ENCODE measurements at regions of chr6 and their contacts with region 1.

Region 1: GRCh38 chr6:319177-320131 is 27.2 kb downstream of the DUSP22 start:
- DNase-seq: peak; percentile 95
- ATAC-seq: peak; percentile 50
- H3K4me3 ChIP-seq: peak overlapping the region; percentile 57
- H3K27ac ChIP-seq: peak overlapping the region; percentile 92
- H3K4me1 ChIP-seq: peaks cover 98% of the 10 kb centered on the region
- H3K27me3 ChIP-seq: no peaks in the 10 kb centered on the region
- CTCF ChIP-seq: no peak
- EP300 ChIP-seq: peak; percentile 72 to 85; a peak in 3 of 4 replicates
- POLR2A ChIP-seq: no peak
- RAD21 ChIP-seq: no peak

Region 2: DNA sequence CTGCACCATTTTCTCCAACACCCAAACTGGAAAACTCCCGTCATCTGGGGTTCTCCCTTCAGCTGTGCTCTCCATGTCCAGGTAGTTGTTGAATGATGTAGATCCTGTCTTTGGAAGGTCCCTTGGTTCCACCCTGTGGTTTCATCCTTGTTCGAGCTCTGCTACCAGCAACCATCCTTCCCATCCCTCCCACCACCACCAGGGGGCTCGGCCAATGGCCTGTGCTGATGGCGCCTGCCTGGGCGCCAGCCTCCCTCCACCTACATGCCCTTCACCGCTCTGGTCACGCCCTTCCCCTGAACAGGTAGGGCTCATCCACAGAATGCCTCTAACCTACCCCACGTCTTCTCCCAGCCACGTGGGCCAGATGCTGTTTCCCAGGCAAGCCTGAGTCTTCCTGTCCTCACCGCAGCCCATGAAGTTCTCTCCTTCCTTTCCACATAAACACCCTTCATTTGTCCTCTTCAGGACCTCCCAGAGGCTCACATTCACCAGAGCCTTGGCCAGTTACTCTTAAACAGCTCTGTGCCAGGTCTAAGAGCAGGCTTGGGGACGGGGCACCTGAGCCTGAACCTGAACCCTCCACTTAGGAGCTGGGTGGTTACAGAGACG is 102.3 kb before region 1 on chr6:
- CTCF ChIA-PET with region 1: interaction called, 9 read pairs
- POLR2A ChIA-PET with region 1: interaction called, 5 read pairs
- RAD21 ChIA-PET with region 1: interaction called, 131 read pairs
- SMC1A ChIA-PET with region 1: interaction called, 14 read pairs
- in situ Hi-C with region 1: no loop called
- intact Hi-C with region 1: no loop called
- DNase-seq: peak; percentile 55
- ATAC-seq: 0 out of 3 replicates have a peak, but pooled peaks have one; percentile 1
- H3K4me3 ChIP-seq: peak overlapping the region; percentile 13; the same call in 1 of the 2 replicates
- H3K27ac ChIP-seq: peak overlapping the region; percentile 94
- H3K4me1 ChIP-seq: peaks cover 86% of the 10 kb centered on the region
- H3K27me3 ChIP-seq: no peaks in the 10 kb centered on the region
- CTCF ChIP-seq: peak; percentile 57 to 73 (median 73)
- EP300 ChIP-seq: no peak
- POLR2A ChIP-seq: no peak
- RAD21 ChIP-seq: peak; percentile 54

Region 3: GRCh38 chr6:291697-292505 is 27.6 kb before region 1 on chr6 and contains the start of gene DUSP22:
- CTCF ChIA-PET with region 1: interaction called, 46 read pairs
- POLR2A ChIA-PET with region 1: interaction called, 61 read pairs
- RAD21 ChIA-PET with region 1: interaction called, 112 read pairs
- SMC1A ChIA-PET with region 1: interaction called, 221 read pairs
- in situ Hi-C with region 1: no loop called
- intact Hi-C with region 1: loop called (anchors 1 kb)
- DNase-seq: peak; percentile 81
- ATAC-seq: peak; percentile 45
- H3K4me3 ChIP-seq: peak within 1 kb of the TSS; percentile 78
- H3K27ac ChIP-seq: peak within 1 kb of the TSS; percentile 100
- H3K4me1 ChIP-seq: peaks cover 64% of the 10 kb centered on the region
- H3K27me3 ChIP-seq: no peaks in the 10 kb centered on the region
- CTCF ChIP-seq: no peak
- EP300 ChIP-seq: peak; percentile 53 to 76; a peak in 2 of 4 replicates
- POLR2A ChIP-seq: no peak
- RAD21 ChIP-seq: peak; percentile 42
- polyA plus RNA-seq, gene DUSP22: 93.4 to 99.7 TPM

Region 4: DNA sequence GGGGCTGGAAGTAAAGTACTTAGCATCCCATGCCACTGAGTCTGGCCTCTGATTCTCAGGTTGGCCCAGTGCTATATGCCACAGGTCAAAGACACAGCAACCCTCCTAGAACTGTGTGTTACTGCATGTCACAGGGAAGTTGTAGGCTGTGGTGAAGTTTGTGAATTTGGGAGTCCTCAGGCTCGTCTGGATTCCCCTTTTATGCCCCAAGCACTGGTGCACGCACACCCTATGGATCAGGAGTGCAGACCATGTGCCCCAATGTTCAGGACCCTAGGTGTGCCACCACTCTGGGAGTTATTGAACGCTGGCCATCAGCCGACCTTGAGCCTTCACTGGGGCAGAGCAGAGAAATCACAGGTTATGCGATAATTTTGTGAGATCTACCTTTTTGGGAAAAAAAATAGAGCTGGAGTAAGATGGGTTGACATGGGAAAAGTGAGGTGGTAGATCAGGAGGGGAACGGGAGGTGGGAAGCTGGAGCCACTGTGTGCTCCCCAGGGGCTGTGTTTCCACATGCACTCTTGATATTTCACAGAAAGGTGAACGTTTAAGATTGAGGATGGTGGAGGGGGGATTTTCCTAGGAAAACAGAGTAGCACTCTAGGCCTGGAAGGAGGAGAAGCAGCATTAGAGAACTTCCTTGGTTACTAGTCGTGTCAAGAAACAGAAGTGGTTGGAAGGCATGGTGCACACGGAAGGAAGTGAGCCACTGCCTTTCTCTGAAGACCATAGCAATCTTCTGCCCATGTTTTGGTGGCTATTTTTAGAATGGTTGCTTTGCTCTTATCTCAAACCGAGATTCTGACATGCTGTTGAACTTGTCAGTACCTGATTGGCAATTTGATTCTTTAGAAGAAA is 16.9 kb after region 1 on chr6:
- CTCF ChIA-PET with region 1: interaction called, 77 read pairs
- POLR2A ChIA-PET with region 1: interaction called, 165 read pairs
- RAD21 ChIA-PET with region 1: interaction called, 256 read pairs
- SMC1A ChIA-PET with region 1: interaction called, 707 read pairs
- in situ Hi-C with region 1: no loop called
- intact Hi-C with region 1: loop called (anchors 1 kb)
- DNase-seq: peak; percentile 88
- ATAC-seq: peak; percentile 12
- H3K4me3 ChIP-seq: peak overlapping the region; percentile 11; the same call in 1 of the 2 replicates
- H3K27ac ChIP-seq: peak overlapping the region; percentile 86
- H3K4me1 ChIP-seq: peaks cover 86% of the 10 kb centered on the region
- H3K27me3 ChIP-seq: no peaks in the 10 kb centered on the region
- CTCF ChIP-seq: no peak
- EP300 ChIP-seq: 0 out of 4 replicates have a peak, but pooled peaks of 1 of the 2 experiments have one; percentile 30
- POLR2A ChIP-seq: no peak
- RAD21 ChIP-seq: 0 out of 2 replicates have a peak, but pooled peaks have one; percentile 21

Region 5: GRCh38 chr6:356828-357251 is 37.4 kb after region 1 on chr6:
- CTCF ChIA-PET with region 1: interaction called, 9 read pairs
- POLR2A ChIA-PET with region 1: interaction called, 3 read pairs
- RAD21 ChIA-PET with region 1: interaction called, 14 read pairs
- SMC1A ChIA-PET with region 1: interaction called, 35 read pairs
- in situ Hi-C with region 1: no loop called
- intact Hi-C with region 1: no loop called
- DNase-seq: no peak
- ATAC-seq: peak; percentile 80
- H3K4me3 ChIP-seq: no peak overlapping the region
- H3K27ac ChIP-seq: peak overlapping the region; percentile 56
- H3K4me1 ChIP-seq: peaks cover 45% of the 10 kb centered on the region
- H3K27me3 ChIP-seq: no peaks in the 10 kb centered on the region
- CTCF ChIP-seq: no peak
- EP300 ChIP-seq: no peak
- POLR2A ChIP-seq: no peak
- RAD21 ChIP-seq: no peak

Region 6: DNA sequence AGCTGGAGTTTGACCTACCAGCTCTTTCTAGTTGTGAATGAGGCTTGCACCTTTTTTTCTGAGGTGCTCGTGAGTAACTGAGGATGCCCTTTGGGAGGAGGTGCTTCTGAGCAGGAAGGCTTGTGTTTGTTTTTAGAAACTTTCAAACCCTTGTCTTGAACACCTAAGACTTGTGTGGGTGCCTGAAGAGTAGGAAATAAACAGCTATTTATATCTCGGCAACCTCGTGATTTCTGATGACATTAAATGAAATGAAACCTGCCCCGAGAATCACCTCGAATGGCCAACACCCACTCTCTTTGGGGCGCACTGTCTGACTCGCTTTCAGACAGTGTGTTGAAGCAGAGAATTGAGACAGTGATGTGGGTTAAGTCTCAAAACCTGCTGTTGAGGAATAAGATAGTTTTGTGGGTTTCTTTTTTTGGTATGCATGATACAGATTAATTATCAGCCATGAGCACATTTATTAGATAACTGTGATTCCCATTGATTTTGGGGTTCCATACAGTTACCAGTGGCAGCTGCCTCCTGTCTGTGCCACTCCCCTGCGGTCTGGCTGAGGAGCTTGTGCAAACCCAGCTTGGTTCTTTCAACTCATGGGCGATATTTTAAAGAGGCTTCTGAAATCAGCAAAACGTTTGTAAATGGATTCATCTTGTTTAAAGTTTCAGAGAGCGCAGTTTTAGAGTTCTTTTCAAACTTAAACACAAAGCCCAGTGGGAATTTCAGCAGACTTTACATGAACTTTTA is 80.5 kb after region 1 on chr6:
- CTCF ChIA-PET with region 1: interaction called, 7 read pairs
- POLR2A ChIA-PET with region 1: interaction called, 7 read pairs
- RAD21 ChIA-PET with region 1: interaction called, 5 read pairs
- SMC1A ChIA-PET with region 1: interaction called, 18 read pairs
- in situ Hi-C with region 1: no loop called
- intact Hi-C with region 1: no loop called
- DNase-seq: no peak
- ATAC-seq: peak; percentile 10
- H3K4me3 ChIP-seq: peak overlapping the region; percentile 61
- H3K27ac ChIP-seq: peak overlapping the region; percentile 39
- H3K4me1 ChIP-seq: peaks cover 35% of the 10 kb centered on the region
- H3K27me3 ChIP-seq: no peaks in the 10 kb centered on the region
- CTCF ChIP-seq: no peak
- EP300 ChIP-seq: peak; percentile 56 to 84; a peak in 2 of 4 replicates
- POLR2A ChIP-seq: peak; percentile 89
- RAD21 ChIP-seq: 0 out of 2 replicates have a peak, but pooled peaks have one; percentile 1